ENCODE measurements at regions of chr10 and their contacts with region 1.

Region 1: DNA sequence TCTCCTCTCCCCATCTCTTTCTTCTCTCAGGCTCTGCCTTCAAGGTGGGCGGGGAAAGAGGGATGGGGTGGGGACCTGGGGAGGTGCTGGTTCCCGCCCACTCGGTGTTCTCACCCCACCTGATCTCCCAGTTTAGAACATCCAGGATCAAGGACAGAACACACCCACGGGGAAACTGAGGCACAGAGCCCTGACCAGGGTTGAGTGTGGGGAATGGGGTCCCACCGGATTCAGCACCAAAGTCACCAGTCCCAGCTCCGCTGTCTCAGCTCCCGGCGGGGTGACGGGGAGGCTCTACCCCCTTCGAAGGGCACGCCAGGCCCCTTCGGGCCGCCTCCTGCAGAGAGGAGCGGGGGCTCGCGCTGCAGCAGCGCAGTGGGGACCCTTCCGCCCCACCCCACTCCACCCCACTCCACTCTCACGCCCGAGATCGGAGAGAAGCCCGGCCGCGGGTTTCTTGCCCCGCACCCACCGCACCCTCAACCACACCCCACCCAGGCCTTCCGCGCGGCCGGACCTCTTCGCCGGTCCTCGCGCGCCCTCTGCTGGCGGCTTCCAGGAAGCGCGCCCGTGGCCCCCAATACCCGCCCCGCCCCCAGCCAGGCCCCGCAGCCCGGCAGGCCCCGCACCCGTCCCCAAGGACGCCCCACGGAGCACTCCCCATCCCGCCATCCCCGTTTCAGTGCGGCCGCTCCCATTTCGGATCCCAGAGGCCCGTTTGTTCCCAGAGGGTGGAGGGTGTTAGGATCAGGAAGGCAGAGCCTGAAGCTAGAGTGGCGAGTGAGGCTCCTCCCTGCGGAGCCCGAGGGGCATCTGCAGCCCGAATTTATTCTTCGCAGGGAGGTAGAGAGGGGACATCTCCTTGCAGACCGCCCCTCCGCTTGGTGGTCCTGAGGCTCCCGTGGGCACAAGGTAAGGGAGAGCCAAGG is 18.0 kb downstream of the POLL start:
- DNase-seq: peak; percentile 82
- ATAC-seq: peak; percentile 55
- H3K4me3 Mint-ChIP-seq: peak overlapping the region; percentile 79
- H3K27ac Mint-ChIP-seq: no peak overlapping the region
- H3K4me1 Mint-ChIP-seq: peaks cover 36% of the 10 kb centered on the region
- H3K27me3 Mint-ChIP-seq: peaks cover 78% of the 10 kb centered on the region
- CTCF ChIP-seq: peak; percentile 95

Region 2: DNA sequence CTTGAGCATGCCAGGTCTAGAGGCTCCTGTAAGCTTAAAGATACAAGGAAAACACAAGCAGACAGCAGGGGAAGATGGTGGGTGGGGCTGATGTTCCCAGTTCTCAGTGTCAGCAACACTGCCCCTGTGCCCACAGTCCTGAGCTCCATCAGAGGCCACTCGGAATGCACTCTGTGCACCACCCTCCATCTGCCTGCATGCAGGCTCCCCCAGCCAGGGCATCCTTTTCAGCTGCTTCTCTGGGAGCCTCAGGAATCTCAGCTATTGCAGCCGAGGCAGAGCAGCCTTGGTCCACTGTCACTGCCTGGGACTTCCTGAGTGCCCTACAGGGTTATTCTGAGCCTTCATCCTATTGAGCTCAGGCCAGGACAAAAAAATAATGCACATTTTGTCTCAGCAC is 363.1 kb before region 1 on chr10:
- CTCF ChIA-PET with region 1: interaction called, 11 read pairs
- POLR2A ChIA-PET with region 1: no interaction called
- DNase-seq: no peak
- ATAC-seq: no peak; the same call in 1 of the 2 replicates
- H3K4me3 Mint-ChIP-seq: no peak overlapping the region
- H3K27ac Mint-ChIP-seq: no peak overlapping the region
- H3K4me1 Mint-ChIP-seq: no peaks in the 10 kb centered on the region; the same call in none of the 2 replicates
- H3K27me3 Mint-ChIP-seq: peaks cover 34% of the 10 kb centered on the region
- CTCF ChIP-seq: no peak

Region 3: DNA sequence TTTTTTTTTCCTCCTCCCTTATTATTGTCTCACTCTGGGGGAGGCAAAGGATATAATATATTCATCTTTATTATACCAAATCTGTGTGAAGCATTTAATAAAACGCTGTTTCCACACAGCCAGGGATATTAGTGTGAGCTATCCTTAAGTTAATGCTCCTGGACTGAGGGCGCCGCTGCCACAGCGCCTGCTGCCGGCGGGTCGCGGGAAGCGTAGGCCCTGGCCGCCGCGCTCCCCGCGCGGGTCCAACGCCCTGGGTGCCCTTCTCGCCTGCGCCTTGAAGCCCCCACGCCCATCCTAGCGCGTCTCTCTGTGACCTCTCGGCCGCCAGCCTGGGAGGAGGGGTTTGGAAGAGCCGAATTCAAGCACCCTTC is 331.4 kb before region 1 on chr10:
- CTCF ChIA-PET with region 1: interaction called, 11 read pairs
- POLR2A ChIA-PET with region 1: no interaction called
- DNase-seq: peak; percentile 55
- ATAC-seq: peak; percentile 50
- H3K4me3 Mint-ChIP-seq: no peak overlapping the region
- H3K27ac Mint-ChIP-seq: no peak overlapping the region
- H3K4me1 Mint-ChIP-seq: peaks cover 25% of the 10 kb centered on the region
- H3K27me3 Mint-ChIP-seq: peaks cover 86% of the 10 kb centered on the region
- CTCF ChIP-seq: no peak

Region 4: GRCh38 chr10:101291331-101292193 is 278.5 kb before region 1 on chr10:
- CTCF ChIA-PET with region 1: interaction called, 54 read pairs
- POLR2A ChIA-PET with region 1: no interaction called
- DNase-seq: peak; percentile 87
- ATAC-seq: peak; percentile 65
- H3K4me3 Mint-ChIP-seq: peak overlapping the region; percentile 80
- H3K27ac Mint-ChIP-seq: no peak overlapping the region
- H3K4me1 Mint-ChIP-seq: peaks cover 39% of the 10 kb centered on the region
- H3K27me3 Mint-ChIP-seq: peaks cover 97% of the 10 kb centered on the region
- CTCF ChIP-seq: peak; percentile 80

Region 5: DNA sequence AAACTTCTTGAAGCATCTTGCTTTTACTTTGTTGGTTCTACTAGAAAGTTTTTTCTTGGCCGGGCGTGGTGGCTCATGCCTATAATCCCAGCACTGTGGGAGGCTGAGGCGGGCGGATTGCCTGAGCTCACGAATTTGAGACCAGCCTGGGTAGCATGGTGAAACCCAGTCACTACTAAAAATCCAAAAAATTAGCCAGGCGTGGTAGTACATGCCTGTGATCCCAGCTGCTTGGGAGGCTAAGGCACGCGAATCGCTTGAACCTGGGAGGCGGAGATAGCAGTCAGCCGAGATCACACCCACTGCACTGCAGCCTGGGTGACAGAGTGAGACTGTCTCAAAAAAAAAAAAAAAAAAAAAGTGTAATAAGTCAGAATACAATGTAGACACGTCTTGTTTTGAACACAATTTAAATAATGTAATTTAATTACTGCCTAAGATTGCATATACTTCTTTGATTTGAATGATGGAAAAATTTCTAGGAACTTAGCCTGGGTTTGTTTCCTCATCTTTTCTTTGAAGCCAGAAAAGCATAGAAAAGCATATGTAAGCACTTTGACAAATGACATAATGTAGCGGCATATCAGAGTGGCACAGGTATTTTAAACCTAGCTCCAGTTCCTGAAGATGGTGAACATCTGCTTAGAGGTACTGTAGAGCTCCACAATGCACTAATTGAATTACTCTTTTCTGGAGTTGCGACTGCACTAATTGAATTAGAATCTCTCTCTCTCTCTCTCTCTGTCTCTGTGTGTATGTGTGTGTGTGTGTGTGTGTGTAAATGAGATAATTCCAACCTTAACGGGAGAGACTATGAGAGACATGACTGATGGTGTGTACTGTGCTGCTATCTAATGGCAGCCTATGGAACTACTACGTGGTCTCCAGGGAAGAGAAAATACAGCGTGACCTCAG is 128.3 kb before region 1 on chr10:
- CTCF ChIA-PET with region 1: interaction called, 11 read pairs
- POLR2A ChIA-PET with region 1: no interaction called
- DNase-seq: peak; percentile 17
- ATAC-seq: peak; percentile 98
- H3K4me3 Mint-ChIP-seq: no peak overlapping the region
- H3K27ac Mint-ChIP-seq: no peak overlapping the region
- H3K4me1 Mint-ChIP-seq: peaks cover 19% of the 10 kb centered on the region
- H3K27me3 Mint-ChIP-seq: no peaks in the 10 kb centered on the region
- CTCF ChIP-seq: no peak

Region 6: GRCh38 chr10:101536800-101537199 is 33.3 kb before region 1 on chr10:
- CTCF ChIA-PET with region 1: interaction called, 12 read pairs
- POLR2A ChIA-PET with region 1: no interaction called
- DNase-seq: no peak
- ATAC-seq: no peak
- H3K4me3 Mint-ChIP-seq: no peak overlapping the region
- H3K27ac Mint-ChIP-seq: no peak overlapping the region
- H3K4me1 Mint-ChIP-seq: peaks cover 4% of the 10 kb centered on the region; the same call in 1 of the 2 replicates
- H3K27me3 Mint-ChIP-seq: no peaks in the 10 kb centered on the region
- CTCF ChIP-seq: peak; percentile 25; the same call in 1 of the 2 replicates

Region 7: GRCh38 chr10:101749047-101750016 is 179.2 kb after region 1 on chr10:
- CTCF ChIA-PET with region 1: interaction called, 3 read pairs
- POLR2A ChIA-PET with region 1: interaction called, 10 read pairs
- DNase-seq: peak; percentile 57
- ATAC-seq: peak; percentile 98
- H3K4me3 Mint-ChIP-seq: no peak overlapping the region
- H3K27ac Mint-ChIP-seq: peak overlapping the region; percentile 61
- H3K4me1 Mint-ChIP-seq: peaks cover 13% of the 10 kb centered on the region
- H3K27me3 Mint-ChIP-seq: peaks cover 7% of the 10 kb centered on the region
- CTCF ChIP-seq: no peak